Ascending aorta (tissue), 2 donors: ENCODE measurements at regions of chr5 and their contacts with region 1.

Region 1: DNA sequence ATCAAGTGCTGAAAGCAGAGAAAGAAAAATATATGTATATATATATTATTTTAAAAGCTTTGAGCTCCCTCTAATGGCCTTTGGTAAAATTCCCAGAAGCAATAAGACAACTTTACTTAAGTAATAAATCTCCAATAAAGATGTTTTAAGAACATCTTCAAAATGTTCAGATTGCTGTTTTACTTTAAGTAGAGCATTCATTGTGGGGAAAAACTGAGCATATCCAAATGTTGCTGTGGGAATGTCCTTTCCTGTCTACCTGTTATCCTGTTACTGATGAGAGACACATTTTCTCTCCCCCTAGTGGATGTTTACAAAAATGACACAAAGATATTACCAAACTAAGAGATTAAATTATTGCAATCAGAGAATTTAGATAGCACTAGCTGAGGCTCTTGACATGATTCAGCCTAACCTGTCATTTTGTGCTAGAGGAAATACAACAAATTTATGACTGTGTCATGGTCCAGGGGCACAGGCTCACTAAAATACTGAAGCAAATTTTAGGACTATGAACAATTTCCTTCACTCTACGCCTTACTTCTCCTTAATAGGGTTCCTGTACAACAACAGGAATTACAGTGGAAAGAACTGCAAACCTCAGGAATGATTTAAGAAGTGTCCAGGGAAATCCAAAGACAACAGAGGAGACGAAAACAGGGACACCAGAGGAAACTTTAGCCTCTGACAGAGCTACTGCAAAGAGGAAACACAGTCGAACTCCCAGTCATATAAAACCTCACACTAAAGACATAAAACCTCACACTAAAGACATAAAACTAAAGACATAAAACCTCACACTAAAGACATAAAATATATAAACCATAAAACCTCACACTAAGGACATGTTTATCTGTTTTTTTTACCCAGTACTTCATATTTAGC is 24.3 kb upstream of the PRRC1 start:
- DNase-seq: no peak
- H3K4me3 ChIP-seq: no peak overlapping the region
- H3K27ac ChIP-seq: no peak overlapping the region
- H3K4me1 ChIP-seq: no peaks in the 10 kb centered on the region
- H3K27me3 ChIP-seq: no peaks in the 10 kb centered on the region
- CTCF ChIP-seq: peak; percentile 18 to 48 (median 46)

Region 2: DNA sequence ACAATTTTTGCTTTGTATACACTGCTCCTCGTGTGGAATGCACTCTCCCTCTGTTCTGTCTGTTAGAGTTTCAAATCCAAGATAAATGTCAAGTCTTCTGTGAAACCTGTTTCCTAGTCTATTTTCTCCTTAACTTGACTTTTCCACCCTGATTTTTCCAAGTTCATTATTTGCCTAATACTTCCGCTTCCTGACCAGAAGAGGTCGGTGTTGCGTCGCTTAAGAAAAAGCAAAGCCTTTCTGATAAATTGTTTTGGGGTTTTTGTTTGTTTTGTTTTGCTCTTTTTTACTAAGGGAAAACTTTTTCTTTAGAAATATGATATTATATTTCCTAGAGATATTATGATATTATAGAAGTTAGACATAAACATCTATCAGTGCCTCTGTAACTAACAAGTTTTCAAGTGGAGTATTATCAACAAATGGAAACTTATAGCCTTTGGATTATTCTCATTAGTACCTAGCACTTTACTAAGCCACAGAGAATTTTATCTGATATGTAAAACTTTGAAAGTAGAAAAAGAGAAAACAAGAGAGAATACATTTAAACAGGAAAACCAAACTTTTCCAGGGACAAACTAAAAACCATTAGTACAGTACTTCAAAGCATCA is 836.6 kb before region 1 on chr5:
- intact Hi-C with region 1: loop called (anchors 10 kb)
- DNase-seq: no peak
- H3K4me3 ChIP-seq: no peak overlapping the region
- H3K27ac ChIP-seq: no peak overlapping the region
- H3K4me1 ChIP-seq: no peaks in the 10 kb centered on the region
- H3K27me3 ChIP-seq: no peaks in the 10 kb centered on the region
- CTCF ChIP-seq: peak; percentile 45 to 70 (median 64)